ENCODE measurements at regions of chr22 and their contacts with region 1.

Region 1: DNA sequence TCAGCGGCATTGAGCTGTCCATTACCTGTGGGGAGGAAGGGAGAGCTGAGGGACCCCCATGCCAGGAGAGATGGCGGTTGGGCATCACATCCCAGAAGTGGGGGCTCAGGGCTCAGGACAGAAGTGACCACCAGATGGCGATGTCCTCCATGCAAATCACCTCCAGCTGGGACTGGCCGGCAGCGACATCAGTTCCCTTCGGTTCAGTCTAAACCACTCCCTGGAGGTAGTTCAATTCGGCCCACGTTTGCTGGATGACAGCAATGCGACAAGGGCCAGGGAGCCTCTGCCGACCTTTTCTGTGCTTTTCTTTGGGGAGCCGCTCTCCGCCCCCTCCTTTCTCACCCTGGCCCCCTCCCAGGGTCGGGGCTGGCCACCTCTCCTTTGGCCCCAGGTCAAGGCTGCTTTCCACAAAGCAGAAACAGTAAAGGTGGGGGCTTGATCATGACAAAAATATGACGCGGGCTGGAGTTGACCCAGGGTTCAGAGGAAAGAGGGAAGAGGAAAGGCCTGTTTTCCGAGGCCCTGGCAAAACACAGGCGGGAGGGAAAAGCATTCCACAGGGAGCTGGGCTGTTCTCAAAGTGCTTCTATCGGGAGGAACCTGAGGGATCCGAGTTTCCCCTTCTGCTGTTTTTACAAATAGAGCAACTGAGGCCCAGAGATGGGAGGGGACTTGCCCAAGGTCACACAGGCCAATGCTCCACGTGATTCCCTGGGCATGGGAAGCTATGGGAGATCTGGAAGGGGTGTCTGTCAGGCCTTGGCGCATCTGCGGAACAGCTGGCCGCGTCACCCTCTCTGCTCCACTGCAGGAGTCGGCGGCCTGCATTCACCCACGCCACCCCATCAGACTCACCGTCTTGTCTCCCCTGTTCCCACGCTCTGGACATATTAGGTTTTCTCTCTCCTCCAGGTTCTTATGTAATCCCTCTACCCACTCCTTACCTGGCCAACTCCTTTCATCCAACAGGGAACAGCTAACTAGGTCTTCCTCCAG is 54.7 kb downstream of the FBXO7 start:
- DNase-seq: peak; percentile 91 to 97
- H3K4me3 ChIP-seq: no peak overlapping the region
- CTCF ChIP-seq: peak in 1 of 3 donors; percentile 82
- POLR2A ChIP-seq: no peak

Region 2: GRCh38 chr22:32796865-32797573 is 267.7 kb after region 1 on chr22:
- intact Hi-C with region 1: loop called (anchors 5 kb)
- DNase-seq: peak; percentile 56 to 94
- H3K4me3 ChIP-seq: no peak overlapping the region
- CTCF ChIP-seq: peak in 1 of 3 donors; percentile 97
- POLR2A ChIP-seq: no peak

Region 3: GRCh38 chr22:33000342-33001280 is 471.3 kb after region 1 on chr22:
- intact Hi-C with region 1: loop called (anchors 5 kb)
- DNase-seq: peak; percentile 57 to 92
- H3K4me3 ChIP-seq: no peak overlapping the region
- CTCF ChIP-seq: peak in 1 of 3 donors; percentile 76
- POLR2A ChIP-seq: no peak